A673 (cell line): ENCODE measurements at regions of chr1 and their contacts with region 1.

Region 1: GRCh38 chr1:226176870-226177269 is 9.7 kb downstream of the ACBD3 start:
- DNase-seq: no peak
- H3K4me3 ChIP-seq: no peak overlapping the region
- H3K27ac ChIP-seq: no peak overlapping the region
- H3K4me1 ChIP-seq: peaks cover 3% of the 10 kb centered on the region
- H3K27me3 ChIP-seq: no peaks in the 10 kb centered on the region
- CTCF ChIP-seq: no peak

Region 2: GRCh38 chr1:224459966-224460365 is 1716.9 kb before region 1 on chr1:
- CTCF ChIA-PET with region 1: no interaction called
- POLR2A ChIA-PET with region 1: no interaction called
- intact Hi-C with region 1: no loop called
- DNase-seq: no peak
- H3K4me3 ChIP-seq: no peak overlapping the region
- H3K27ac ChIP-seq: no peak overlapping the region
- H3K4me1 ChIP-seq: peaks cover 8% of the 10 kb centered on the region
- H3K27me3 ChIP-seq: no peaks in the 10 kb centered on the region
- CTCF ChIP-seq: no peak

Region 3: GRCh38 chr1:226128487-226129075 is 48.3 kb before region 1 on chr1:
- CTCF ChIA-PET with region 1: interaction called, 12 read pairs
- POLR2A ChIA-PET with region 1: no interaction called
- intact Hi-C with region 1: no loop called
- DNase-seq: no peak
- H3K4me3 ChIP-seq: no peak overlapping the region
- H3K27ac ChIP-seq: no peak overlapping the region
- H3K4me1 ChIP-seq: peaks cover 5% of the 10 kb centered on the region
- H3K27me3 ChIP-seq: no peaks in the 10 kb centered on the region
- CTCF ChIP-seq: no peak